Naive thymus-derived CD4-positive, alpha-beta T cell (primary cell): ENCODE measurements at regions of chrX and their contacts with region 1.

Region 1: GRCh38 chrX:78957768-78958130 is 12.6 kb downstream of the P2RY10 start:
- DNase-seq: no peak
- ATAC-seq: peak; percentile 26
- H3K4me3 ChIP-seq: no peak overlapping the region
- H3K4me3 Mint-ChIP-seq: peak overlapping the region in 7 of 10 donors; percentile 5 to 49 (median 32)
- H3K27ac ChIP-seq: peak overlapping the region; percentile 51
- H3K27ac Mint-ChIP-seq: peak overlapping the region; percentile 61 to 97 (median 88)
- H3K4me1 ChIP-seq: peaks cover 34 to 35% of the 10 kb centered on the region in 2 donors
- H3K4me1 Mint-ChIP-seq: peaks cover 31 to 84% (median 64%) of the 10 kb centered on the region in 7 donors
- H3K27me3 ChIP-seq: no peaks in the 10 kb centered on the region
- H3K27me3 Mint-ChIP-seq: no peaks in the 10 kb centered on the region

Region 2: GRCh38 chrX:78923198-78924015 is 34.3 kb before region 1 on chrX:
- CTCF ChIA-PET with region 1: no interaction called
- POLR2A ChIA-PET with region 1: no interaction called
- intact Hi-C with region 1: loop called in 1 of 2 experiments (anchors 5 kb)
- DNase-seq: no peak
- ATAC-seq: no peak
- H3K4me3 ChIP-seq: no peak overlapping the region
- H3K4me3 Mint-ChIP-seq: peak overlapping the region in 1 of 10 donors; percentile 65
- H3K27ac ChIP-seq: no peak overlapping the region
- H3K27ac Mint-ChIP-seq: peak overlapping the region in 2 of 9 donors; percentile 48 to 84
- H3K4me1 ChIP-seq: no peaks in the 10 kb centered on the region
- H3K4me1 Mint-ChIP-seq: peaks cover 0 to 13% (median 4%) of the 10 kb centered on the region in 7 donors
- H3K27me3 ChIP-seq: no peaks in the 10 kb centered on the region
- H3K27me3 Mint-ChIP-seq: no peaks in the 10 kb centered on the region

Region 3: DNA sequence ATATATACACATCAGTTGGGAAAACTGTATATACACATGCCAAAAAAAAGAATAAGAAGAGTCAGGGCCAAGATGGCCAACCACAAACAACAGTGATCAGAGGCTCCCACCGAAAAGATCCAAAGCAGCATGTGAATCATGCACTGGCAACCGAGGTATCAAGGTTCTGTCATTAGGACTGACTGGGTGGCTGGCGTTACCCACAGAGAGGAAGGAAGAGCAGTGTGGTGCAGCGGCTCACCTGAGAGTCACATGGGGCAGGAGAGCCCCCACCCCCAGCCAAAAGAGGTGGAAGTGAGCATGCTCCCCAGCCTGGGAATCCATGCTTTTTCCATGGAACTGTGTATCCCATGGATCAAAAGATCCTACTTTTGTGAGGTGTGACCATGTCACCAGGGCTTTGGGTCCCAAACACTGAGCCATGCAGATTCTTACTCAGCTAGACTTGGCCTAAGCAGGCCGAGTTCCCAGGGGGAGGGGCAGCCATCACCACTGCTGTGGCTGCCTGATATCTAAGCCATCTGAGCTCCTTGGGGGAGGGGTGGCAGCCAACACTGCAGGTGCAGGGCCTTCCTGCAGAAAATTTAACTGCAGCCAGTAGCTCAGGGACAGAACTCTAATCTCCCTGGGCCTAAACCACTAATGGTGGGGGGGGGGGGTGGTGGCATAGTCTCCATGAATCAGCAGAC is 40.3 kb after region 1 on chrX:
- CTCF ChIA-PET with region 1: no interaction called
- POLR2A ChIA-PET with region 1: no interaction called
- intact Hi-C with region 1: loop called in 1 of 2 experiments (anchors 10 kb)
- DNase-seq: peak in 1 of 9 donors; percentile 0
- ATAC-seq: no peak
- H3K4me3 ChIP-seq: no peak overlapping the region
- H3K4me3 Mint-ChIP-seq: peak overlapping the region in 5 of 10 donors; percentile 15 to 55 (median 48)
- H3K27ac ChIP-seq: no peak overlapping the region
- H3K27ac Mint-ChIP-seq: peak overlapping the region in 4 of 9 donors; percentile 56 to 84 (median 64)
- H3K4me1 ChIP-seq: peaks cover 0 to 8% of the 10 kb centered on the region in 2 donors
- H3K4me1 Mint-ChIP-seq: peaks cover 0 to 7% (median 5%) of the 10 kb centered on the region in 7 donors
- H3K27me3 ChIP-seq: no peaks in the 10 kb centered on the region
- H3K27me3 Mint-ChIP-seq: no peaks in the 10 kb centered on the region